ENCODE measurements at regions of chr13 and their contacts with region 1.

Region 1: GRCh38 chr13:43865892-43866291 is 13.6 kb downstream of the CCDC122 start:
- DNase-seq: no peak
- ATAC-seq: no peak
- H3K4me3 ChIP-seq: no peak overlapping the region
- H3K27ac ChIP-seq: no peak overlapping the region
- H3K4me1 ChIP-seq: no peaks in the 10 kb centered on the region
- H3K27me3 ChIP-seq: no peaks in the 10 kb centered on the region

Region 2: GRCh38 chr13:42478531-42479156 is 1387.2 kb before region 1 on chr13:
- intact Hi-C with region 1: loop called in 1 of 2 experiments (anchors 10 kb)
- DNase-seq: no peak
- ATAC-seq: no peak
- H3K4me3 ChIP-seq: no peak overlapping the region
- H3K27ac ChIP-seq: no peak overlapping the region
- H3K4me1 ChIP-seq: no peaks in the 10 kb centered on the region
- H3K27me3 ChIP-seq: no peaks in the 10 kb centered on the region

Region 3: DNA sequence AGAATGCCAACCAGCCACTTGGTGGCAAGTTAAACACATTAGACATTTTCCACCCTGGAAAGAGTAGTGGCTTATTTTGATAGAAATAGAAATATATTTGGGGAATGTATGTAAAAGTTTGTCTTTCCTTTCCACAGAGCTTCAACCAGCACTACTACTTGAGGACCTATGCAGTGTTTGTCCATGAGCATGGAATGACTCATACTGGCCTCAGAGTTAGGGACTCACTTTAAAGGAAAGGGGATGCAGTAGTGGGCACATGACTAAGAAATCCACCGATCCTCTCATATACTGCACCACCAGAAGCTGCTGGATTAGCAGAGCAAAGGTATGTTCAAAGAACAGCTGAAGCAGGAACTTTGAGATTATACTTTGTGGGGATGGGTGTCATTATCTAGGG is 76.4 kb after region 1 on chr13:
- intact Hi-C with region 1: no loop called
- DNase-seq: no peak
- ATAC-seq: no peak
- H3K4me3 ChIP-seq: no peak overlapping the region
- H3K27ac ChIP-seq: no peak overlapping the region
- H3K4me1 ChIP-seq: no peaks in the 10 kb centered on the region
- H3K27me3 ChIP-seq: no peaks in the 10 kb centered on the region